CD8-positive, alpha-beta T cell (primary cell): ENCODE measurements at regions of chr17 and their contacts with region 1.

Region 1: DNA sequence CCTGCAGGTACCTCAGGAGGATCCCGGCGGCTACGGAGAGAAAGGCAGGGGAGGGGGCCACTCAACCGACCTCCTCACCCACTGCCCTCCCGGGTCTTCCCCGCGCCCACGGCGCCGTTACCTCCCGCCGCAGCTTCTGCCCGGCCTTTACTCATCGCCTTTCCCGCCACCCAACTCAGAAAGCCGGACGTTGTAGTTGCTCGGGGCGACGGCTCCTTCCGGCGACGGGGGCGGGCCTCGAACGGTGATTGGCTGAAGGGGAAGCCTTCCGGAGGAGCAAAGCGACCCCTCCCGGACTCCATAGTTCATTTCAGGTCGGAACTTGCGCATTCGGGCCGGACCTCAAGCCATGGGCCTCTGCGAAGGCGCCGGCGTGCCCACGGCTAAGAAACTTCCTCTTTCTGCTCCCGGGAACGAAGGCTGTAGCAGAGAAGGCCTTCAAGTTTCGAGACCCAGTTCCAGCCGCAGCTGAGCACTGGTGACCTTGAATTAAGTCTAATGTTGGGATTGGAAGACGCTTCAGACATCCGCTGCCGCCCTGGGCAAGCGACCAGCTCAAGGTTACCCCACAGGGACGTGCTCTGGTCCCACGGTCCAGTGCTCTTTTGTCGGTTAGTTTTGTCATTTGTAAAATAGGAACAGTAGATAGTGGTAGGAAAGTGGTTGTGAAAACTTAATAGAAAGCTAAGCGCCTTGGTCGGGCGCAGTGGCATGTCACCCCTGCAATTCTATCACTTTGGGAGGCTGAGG is at the start of gene PSMC3IP:
- DNase-seq: peak; percentile 73 to 94 (median 91)
- ATAC-seq: peak; percentile 91
- H3K4me3 ChIP-seq: peak within 1 kb of the TSS; percentile 97 to 98
- H3K4me3 Mint-ChIP-seq: peak within 1 kb of the TSS; percentile 99
- H3K27ac ChIP-seq: peak within 1 kb of the TSS; percentile 76 to 88
- H3K27ac Mint-ChIP-seq: peak within 1 kb of the TSS; percentile 94
- H3K4me1 ChIP-seq: peaks cover 15% of the 10 kb centered on the region
- H3K4me1 Mint-ChIP-seq: peaks cover 29% of the 10 kb centered on the region
- H3K27me3 ChIP-seq: no peaks in the 10 kb centered on the region
- H3K27me3 Mint-ChIP-seq: no peaks in the 10 kb centered on the region
- CTCF ChIP-seq: no peak
- total RNA-seq, gene PSMC3IP: 3.9 to 4.1 TPM

Region 2: DNA sequence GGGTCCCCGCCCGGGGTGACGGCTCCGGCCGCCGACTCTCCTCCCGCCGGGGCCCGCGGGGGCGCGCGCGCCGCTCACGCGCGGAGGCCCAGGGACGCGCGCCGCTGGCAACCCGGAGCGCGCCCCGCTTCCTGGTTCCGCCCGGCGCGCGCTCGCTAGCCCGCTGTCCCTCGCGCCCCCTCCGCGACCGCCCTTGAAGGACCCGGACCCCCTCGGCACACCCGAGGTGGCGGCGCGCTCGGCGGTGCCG is 301.4 kb before region 1 on chr17 and contains the start of gene STAT5B:
- CTCF ChIA-PET with region 1: no interaction called
- POLR2A ChIA-PET with region 1: no interaction called
- intact Hi-C with region 1: no loop called
- DNase-seq: peak; percentile 30 to 89 (median 66)
- ATAC-seq: peak; percentile 33
- H3K4me3 ChIP-seq: peak within 1 kb of the TSS; percentile 72 to 84
- H3K4me3 Mint-ChIP-seq: peak within 1 kb of the TSS; percentile 96
- H3K27ac ChIP-seq: peak within 1 kb of the TSS; percentile 77 to 83
- H3K27ac Mint-ChIP-seq: peak within 1 kb of the TSS; percentile 98
- H3K4me1 ChIP-seq: peaks cover 48% of the 10 kb centered on the region
- H3K4me1 Mint-ChIP-seq: peaks cover 52% of the 10 kb centered on the region
- H3K27me3 ChIP-seq: no peaks in the 10 kb centered on the region
- H3K27me3 Mint-ChIP-seq: no peaks in the 10 kb centered on the region
- CTCF ChIP-seq: no peak
- total RNA-seq, gene STAT5B: 85.2 to 85.5 TPM

Region 3: DNA sequence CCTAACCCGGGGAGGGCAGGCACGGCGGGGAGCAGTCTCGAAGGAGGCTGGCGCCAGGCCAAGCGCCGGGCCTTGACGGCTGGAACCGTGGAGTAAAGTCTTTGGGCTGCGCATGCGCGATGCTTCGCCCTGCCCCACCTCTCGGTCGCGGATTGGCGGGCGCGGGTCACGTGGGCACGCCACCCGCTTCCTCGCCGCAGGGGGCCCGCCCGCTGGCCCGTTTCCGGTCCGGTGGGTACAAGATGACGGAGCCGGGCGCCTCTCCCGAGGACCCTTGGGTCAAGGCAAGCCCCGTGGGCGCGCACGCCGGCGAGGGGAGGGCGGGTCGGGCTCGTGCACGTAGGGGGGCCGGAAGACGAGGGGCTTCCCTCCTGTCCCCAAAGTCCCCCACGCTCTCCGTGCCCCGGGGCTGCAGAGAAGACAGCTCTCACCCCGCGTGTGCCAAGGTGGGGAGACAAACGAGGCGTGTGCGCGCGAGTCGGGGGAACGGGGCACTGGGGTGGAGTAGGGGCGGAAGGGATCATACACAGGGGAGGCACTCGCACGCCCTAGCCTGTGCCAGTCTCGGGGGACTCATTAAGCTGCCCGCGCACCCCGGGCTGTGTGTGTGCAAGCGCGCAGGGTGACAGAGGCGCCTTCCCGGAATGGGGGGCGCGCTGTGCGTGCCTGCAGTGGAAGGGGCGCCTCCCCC is 10.7 kb before region 1 on chr17 and contains the start of gene MLX:
- CTCF ChIA-PET with region 1: interaction called, 48 read pairs
- POLR2A ChIA-PET with region 1: interaction called, 25 read pairs
- intact Hi-C with region 1: loop called (anchors 1 kb)
- DNase-seq: peak; percentile 75 to 96 (median 92)
- ATAC-seq: peak; percentile 75
- H3K4me3 ChIP-seq: peak within 1 kb of the TSS; percentile 88 to 91
- H3K4me3 Mint-ChIP-seq: peak within 1 kb of the TSS; percentile 97
- H3K27ac ChIP-seq: peak within 1 kb of the TSS; percentile 77
- H3K27ac Mint-ChIP-seq: peak within 1 kb of the TSS; percentile 97
- H3K4me1 ChIP-seq: peaks cover 41% of the 10 kb centered on the region
- H3K4me1 Mint-ChIP-seq: peaks cover 40% of the 10 kb centered on the region
- H3K27me3 ChIP-seq: no peaks in the 10 kb centered on the region
- H3K27me3 Mint-ChIP-seq: no peaks in the 10 kb centered on the region
- CTCF ChIP-seq: no peak
- total RNA-seq, gene MLX: 18.3 to 21.3 TPM

Region 4: DNA sequence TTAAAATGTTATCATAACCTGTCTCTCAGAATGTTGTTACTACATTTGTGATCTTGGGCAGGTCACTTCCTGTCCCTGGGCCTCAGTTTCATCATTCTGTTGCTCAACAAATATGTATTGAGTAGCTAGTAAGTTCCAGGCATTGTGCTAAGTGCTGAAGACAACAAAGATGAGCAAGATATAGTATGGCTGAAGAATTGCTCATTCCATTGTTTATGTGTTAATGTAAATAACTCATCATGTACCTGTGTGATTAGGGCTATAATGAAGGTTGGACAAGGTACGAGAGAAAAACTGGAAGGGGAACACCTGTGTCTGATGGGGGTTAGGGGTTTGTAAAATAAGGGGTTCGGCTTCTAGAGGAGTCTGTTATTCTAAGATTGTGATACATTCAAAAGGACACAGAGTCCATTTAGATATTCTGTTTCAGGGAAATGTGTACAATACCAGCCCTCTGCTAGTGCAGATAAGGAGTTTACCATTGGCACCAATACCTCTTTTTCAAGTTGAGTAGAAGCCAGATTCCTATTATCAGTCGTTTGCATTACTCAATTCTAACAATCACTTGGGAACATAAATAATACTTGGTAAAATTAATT is 51.8 kb after region 1 on chr17:
- CTCF ChIA-PET with region 1: no interaction called
- POLR2A ChIA-PET with region 1: no interaction called
- intact Hi-C with region 1: no loop called
- DNase-seq: no peak
- ATAC-seq: no peak
- H3K4me3 ChIP-seq: no peak overlapping the region
- H3K4me3 Mint-ChIP-seq: no peak overlapping the region
- H3K27ac ChIP-seq: no peak overlapping the region
- H3K27ac Mint-ChIP-seq: no peak overlapping the region
- H3K4me1 ChIP-seq: no peaks in the 10 kb centered on the region
- H3K4me1 Mint-ChIP-seq: no peaks in the 10 kb centered on the region
- H3K27me3 ChIP-seq: no peaks in the 10 kb centered on the region
- H3K27me3 Mint-ChIP-seq: no peaks in the 10 kb centered on the region
- CTCF ChIP-seq: no peak

Region 5: DNA sequence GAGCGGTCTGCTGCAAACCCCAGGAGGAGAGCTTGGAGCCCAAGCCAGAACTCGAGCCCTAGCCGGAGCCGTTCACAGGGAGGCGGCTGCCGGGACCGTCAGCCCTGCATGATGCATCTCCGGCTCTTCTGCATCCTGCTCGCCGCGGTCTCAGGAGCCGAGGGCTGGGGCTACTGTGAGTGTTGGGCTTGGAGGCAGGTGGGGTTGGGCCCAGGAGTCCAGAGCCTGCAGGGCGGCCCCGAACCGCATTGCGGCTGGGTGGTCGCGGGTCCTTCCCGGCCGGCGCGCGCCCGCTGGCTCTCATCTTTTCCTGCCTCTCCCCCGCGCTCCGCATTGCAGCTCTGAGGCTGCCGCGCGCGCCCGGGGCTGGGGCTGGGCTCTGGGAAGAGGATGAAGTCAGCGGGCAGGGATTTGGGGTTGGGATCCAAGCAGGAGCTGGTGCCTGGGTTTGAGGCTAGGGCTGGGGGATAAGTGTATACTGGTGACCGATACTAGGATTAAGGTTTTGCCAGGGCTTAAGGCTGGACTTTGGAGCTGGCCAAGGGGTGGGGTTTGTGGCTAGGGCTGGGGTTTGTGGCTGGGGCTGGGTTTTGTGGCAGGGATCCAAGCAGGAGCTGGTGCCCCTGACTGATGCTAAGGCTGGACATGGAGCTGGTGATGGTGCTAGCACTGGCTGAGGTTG is 105.2 kb after region 1 on chr17:
- CTCF ChIA-PET with region 1: interaction called, 33 read pairs
- POLR2A ChIA-PET with region 1: interaction called, 11 read pairs
- intact Hi-C with region 1: loop called (anchors 1 kb)
- DNase-seq: peak in 5 of 9 experiments; percentile 27 to 45 (median 30)
- ATAC-seq: no peak
- H3K4me3 ChIP-seq: peak overlapping the region; percentile 12 to 35
- H3K4me3 Mint-ChIP-seq: peak overlapping the region; percentile 67
- H3K27ac ChIP-seq: no peak overlapping the region
- H3K27ac Mint-ChIP-seq: no peak overlapping the region
- H3K4me1 ChIP-seq: peaks cover 50% of the 10 kb centered on the region
- H3K4me1 Mint-ChIP-seq: peaks cover 45% of the 10 kb centered on the region
- H3K27me3 ChIP-seq: peaks cover 0 to 33% of the 10 kb centered on the region in 2 experiments
- H3K27me3 Mint-ChIP-seq: peaks cover 33% of the 10 kb centered on the region
- CTCF ChIP-seq: no peak

Region 6: GRCh38 chr17:42702446-42702845 is 124.7 kb after region 1 on chr17:
- CTCF ChIA-PET with region 1: no interaction called
- POLR2A ChIA-PET with region 1: no interaction called
- intact Hi-C with region 1: no loop called
- DNase-seq: no peak
- ATAC-seq: no peak
- H3K4me3 ChIP-seq: no peak overlapping the region
- H3K4me3 Mint-ChIP-seq: no peak overlapping the region
- H3K27ac ChIP-seq: no peak overlapping the region
- H3K27ac Mint-ChIP-seq: no peak overlapping the region
- H3K4me1 ChIP-seq: peaks cover 15% of the 10 kb centered on the region
- H3K4me1 Mint-ChIP-seq: peaks cover 9% of the 10 kb centered on the region
- H3K27me3 ChIP-seq: no peaks in the 10 kb centered on the region
- H3K27me3 Mint-ChIP-seq: no peaks in the 10 kb centered on the region
- CTCF ChIP-seq: no peak

Region 7: GRCh38 chr17:42760652-42761581 is 183.2 kb after region 1 on chr17 and contains the start of gene RAMP2:
- CTCF ChIA-PET with region 1: interaction called, 22 read pairs
- POLR2A ChIA-PET with region 1: interaction called, 4 read pairs
- intact Hi-C with region 1: loop called (anchors 1 kb)
- DNase-seq: peak in 4 of 9 experiments; percentile 7 to 46 (median 30)
- ATAC-seq: peak; percentile 65
- H3K4me3 ChIP-seq: peak within 1 kb of the TSS in 1 of 2 experiments; percentile 27
- H3K4me3 Mint-ChIP-seq: peak within 1 kb of the TSS; percentile 55
- H3K27ac ChIP-seq: no peak within 1 kb of the TSS
- H3K27ac Mint-ChIP-seq: no peak within 1 kb of the TSS
- H3K4me1 ChIP-seq: peaks cover 9% of the 10 kb centered on the region
- H3K4me1 Mint-ChIP-seq: peaks cover 11% of the 10 kb centered on the region
- H3K27me3 ChIP-seq: peaks cover 26 to 27% of the 10 kb centered on the region in 2 experiments
- H3K27me3 Mint-ChIP-seq: peaks cover 53% of the 10 kb centered on the region
- CTCF ChIP-seq: no peak
- total RNA-seq, gene RAMP2: not detected

Region 8: DNA sequence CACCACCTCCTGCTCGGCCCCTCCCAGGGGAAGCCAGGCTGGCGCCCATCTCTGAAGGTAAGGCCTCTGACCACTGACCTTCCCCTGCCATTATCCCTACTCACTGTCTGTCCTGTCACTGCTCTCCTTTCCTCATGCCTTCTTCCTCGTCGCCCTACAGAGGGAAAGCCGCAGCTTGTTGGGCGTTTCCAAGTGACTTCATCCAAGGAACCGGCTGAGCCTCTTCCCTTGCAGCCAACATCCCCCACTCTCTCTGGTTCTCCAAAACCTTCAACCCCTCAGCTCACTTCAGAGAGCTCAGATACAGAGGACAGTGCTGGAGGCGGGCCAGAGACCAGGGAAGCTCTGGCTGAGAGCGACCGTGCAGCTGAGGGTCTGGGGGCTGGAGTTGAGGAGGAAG is 217.8 kb after region 1 on chr17:
- CTCF ChIA-PET with region 1: no interaction called
- POLR2A ChIA-PET with region 1: no interaction called
- intact Hi-C with region 1: no loop called
- DNase-seq: no peak
- ATAC-seq: no peak
- H3K4me3 ChIP-seq: no peak overlapping the region
- H3K4me3 Mint-ChIP-seq: no peak overlapping the region
- H3K27ac ChIP-seq: no peak overlapping the region
- H3K27ac Mint-ChIP-seq: no peak overlapping the region
- H3K4me1 ChIP-seq: peaks cover 13% of the 10 kb centered on the region
- H3K4me1 Mint-ChIP-seq: peaks cover 28% of the 10 kb centered on the region
- H3K27me3 ChIP-seq: no peaks in the 10 kb centered on the region
- H3K27me3 Mint-ChIP-seq: peaks cover 2% of the 10 kb centered on the region
- CTCF ChIP-seq: no peak

Region 9: DNA sequence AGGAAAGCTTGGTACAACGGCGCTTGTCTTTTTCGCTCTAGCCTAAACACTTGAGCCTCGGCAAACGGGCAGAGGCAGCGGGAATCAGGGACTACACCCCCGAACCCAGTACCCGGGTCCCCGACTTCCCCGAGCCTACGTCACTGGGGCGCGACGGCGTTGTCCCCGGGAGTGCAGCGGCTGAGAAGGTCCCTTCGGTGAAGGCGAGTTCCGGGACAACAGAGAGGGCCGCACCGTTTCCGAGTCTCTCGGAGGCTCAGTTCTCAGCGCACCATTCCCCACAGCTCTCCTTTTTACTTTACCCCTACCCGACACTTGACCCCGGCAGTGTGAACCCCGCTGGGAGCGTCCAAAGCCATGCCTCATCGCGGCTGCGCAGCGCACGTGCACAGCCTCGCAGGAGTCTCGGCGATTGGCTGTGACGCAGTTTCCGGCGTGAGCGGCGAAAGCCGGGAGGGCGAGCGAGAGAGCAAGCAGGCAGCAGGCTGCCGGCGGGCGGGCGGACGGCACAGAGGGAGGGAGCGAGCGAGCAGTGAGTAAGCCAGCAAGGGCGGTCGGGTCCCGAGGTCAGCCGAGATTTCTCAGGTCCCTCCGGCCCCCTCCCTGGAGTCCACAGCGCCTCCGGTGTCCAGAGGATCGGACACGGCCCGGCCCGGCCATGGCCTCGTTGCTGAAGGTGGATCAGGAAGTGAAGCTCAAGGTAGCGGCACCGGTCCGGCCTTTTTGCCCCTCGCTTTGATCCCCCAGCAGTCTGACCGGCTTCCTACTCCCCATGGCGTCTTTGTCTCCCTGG is 255.5 kb after region 1 on chr17 and contains the start of gene PSME3:
- CTCF ChIA-PET with region 1: no interaction called
- POLR2A ChIA-PET with region 1: no interaction called
- intact Hi-C with region 1: loop called in 1 of 2 experiments (anchors 2 kb)
- DNase-seq: peak; percentile 75 to 95 (median 88)
- ATAC-seq: peak; percentile 87
- H3K4me3 ChIP-seq: peak within 1 kb of the TSS; percentile 93 to 100
- H3K4me3 Mint-ChIP-seq: peak within 1 kb of the TSS; percentile 97
- H3K27ac ChIP-seq: peak within 1 kb of the TSS; percentile 95
- H3K27ac Mint-ChIP-seq: peak within 1 kb of the TSS; percentile 99
- H3K4me1 ChIP-seq: peaks cover 17% of the 10 kb centered on the region
- H3K4me1 Mint-ChIP-seq: peaks cover 31% of the 10 kb centered on the region
- H3K27me3 ChIP-seq: no peaks in the 10 kb centered on the region
- H3K27me3 Mint-ChIP-seq: no peaks in the 10 kb centered on the region
- CTCF ChIP-seq: no peak
- total RNA-seq, gene PSME3: 74.1 to 74.2 TPM